Activated CD4-positive, alpha-beta T cell treated with anti-CD3 and anti-CD28 coated beads, Interleukin-2, amount 10 ng/mL, durations not matched to agents 24 days and 14 days (primary cell): ENCODE measurements at regions of chr10 and their contacts with region 1.

Region 1: GRCh38 chr10:114876602-114877300 is 55.2 kb downstream of the FHIP2A start:
- DNase-seq: peak; percentile 82
- H3K4me3 Mint-ChIP-seq: no peak overlapping the region
- H3K27ac Mint-ChIP-seq: no peak overlapping the region
- H3K4me1 Mint-ChIP-seq: peaks cover 26% of the 10 kb centered on the region
- H3K27me3 Mint-ChIP-seq: peaks cover 34% of the 10 kb centered on the region

Region 2: GRCh38 chr10:114911052-114911711 is 34.4 kb after region 1 on chr10:
- intact Hi-C with region 1: loop called (anchors 2 kb)
- DNase-seq: no peak
- H3K4me3 Mint-ChIP-seq: no peak overlapping the region
- H3K27ac Mint-ChIP-seq: peak overlapping the region; percentile 14
- H3K4me1 Mint-ChIP-seq: peaks cover 17% of the 10 kb centered on the region
- H3K27me3 Mint-ChIP-seq: peaks cover 5% of the 10 kb centered on the region

Region 3: GRCh38 chr10:114987995-114988394 is 111.2 kb after region 1 on chr10:
- intact Hi-C with region 1: no loop called
- DNase-seq: no peak
- H3K4me3 Mint-ChIP-seq: no peak overlapping the region
- H3K27ac Mint-ChIP-seq: no peak overlapping the region
- H3K4me1 Mint-ChIP-seq: no peaks in the 10 kb centered on the region
- H3K27me3 Mint-ChIP-seq: no peaks in the 10 kb centered on the region

Region 4: GRCh38 chr10:115018185-115018931 is 141.6 kb after region 1 on chr10:
- intact Hi-C with region 1: loop called (anchors 5 kb)
- DNase-seq: no peak
- H3K4me3 Mint-ChIP-seq: no peak overlapping the region
- H3K27ac Mint-ChIP-seq: no peak overlapping the region
- H3K4me1 Mint-ChIP-seq: no peaks in the 10 kb centered on the region
- H3K27me3 Mint-ChIP-seq: peaks cover 6% of the 10 kb centered on the region

Region 5: GRCh38 chr10:115092555-115093285 is 216.0 kb after region 1 on chr10:
- intact Hi-C with region 1: loop called (anchors 10 kb)
- DNase-seq: peak; percentile 81
- H3K4me3 Mint-ChIP-seq: peak overlapping the region; percentile 81
- H3K27ac Mint-ChIP-seq: no peak overlapping the region
- H3K4me1 Mint-ChIP-seq: peaks cover 10% of the 10 kb centered on the region
- H3K27me3 Mint-ChIP-seq: peaks cover 57% of the 10 kb centered on the region

Region 6: GRCh38 chr10:115129752-115130151 is 253.0 kb after region 1 on chr10:
- intact Hi-C with region 1: loop called (anchors 1 kb)
- DNase-seq: no peak
- H3K4me3 Mint-ChIP-seq: no peak overlapping the region
- H3K27ac Mint-ChIP-seq: no peak overlapping the region
- H3K4me1 Mint-ChIP-seq: no peaks in the 10 kb centered on the region
- H3K27me3 Mint-ChIP-seq: no peaks in the 10 kb centered on the region